CD4-positive, alpha-beta memory T cell (primary cell): ENCODE measurements at regions of chr2 and their contacts with region 1.

Region 1: DNA sequence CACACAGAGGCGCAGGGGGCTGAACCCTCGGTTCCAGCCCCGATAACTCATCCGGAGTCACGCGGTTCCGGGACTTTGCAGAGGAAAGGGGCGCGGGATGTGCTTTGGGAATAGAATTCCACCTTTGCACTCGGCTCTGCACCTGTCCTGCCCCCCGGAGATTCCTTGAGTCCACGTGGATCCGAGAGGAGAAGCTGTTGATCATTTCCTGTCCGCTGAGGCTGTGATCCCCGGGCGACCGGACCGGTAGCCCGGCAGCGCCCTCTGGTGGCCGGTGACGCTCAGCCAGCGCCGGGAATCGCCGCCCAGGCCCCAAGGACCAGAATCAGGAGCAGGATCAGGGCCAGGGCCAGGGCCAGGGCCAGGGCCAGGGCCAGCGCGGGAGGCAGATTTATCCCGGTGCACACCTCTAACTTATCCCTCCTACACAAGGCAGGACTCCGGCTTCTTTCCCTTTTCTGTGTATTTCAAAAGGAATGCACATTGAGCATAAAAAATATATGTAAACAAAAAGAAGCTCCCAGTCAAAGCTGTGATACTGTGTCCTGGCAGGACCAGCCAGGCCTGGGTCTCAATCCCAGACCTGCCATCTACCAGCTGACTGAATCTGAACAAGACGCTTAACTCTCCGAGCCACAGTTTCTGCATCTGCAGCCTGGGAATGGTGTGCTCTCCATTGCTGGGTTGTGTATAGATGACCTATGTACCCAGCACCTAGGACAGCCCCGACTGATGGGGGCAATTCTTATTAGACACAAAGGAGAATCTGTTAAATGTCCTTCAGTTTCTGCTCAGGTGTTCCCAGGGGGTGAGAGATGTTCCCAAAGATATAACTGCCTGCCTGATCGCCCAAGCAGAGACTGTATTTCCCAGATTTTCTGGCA is 8.5 kb upstream of the SPATA3 start:
- DNase-seq: peak; percentile 60 to 74 (median 69)
- H3K4me3 ChIP-seq: peak overlapping the region in 1 of 2 donors; percentile 63
- H3K4me3 Mint-ChIP-seq: peak overlapping the region; percentile 52 to 73 (median 63)
- H3K27ac ChIP-seq: no peak overlapping the region
- H3K27ac Mint-ChIP-seq: peak overlapping the region in 2 of 7 donors; percentile 41 to 74
- H3K4me1 ChIP-seq: peaks cover 17% of the 10 kb centered on the region
- H3K4me1 Mint-ChIP-seq: peaks cover 4 to 21% (median 14%) of the 10 kb centered on the region in 4 donors
- H3K27me3 ChIP-seq: no peaks in the 10 kb centered on the region
- H3K27me3 Mint-ChIP-seq: peaks cover 5 to 11% of the 10 kb centered on the region in 2 donors

Region 2: DNA sequence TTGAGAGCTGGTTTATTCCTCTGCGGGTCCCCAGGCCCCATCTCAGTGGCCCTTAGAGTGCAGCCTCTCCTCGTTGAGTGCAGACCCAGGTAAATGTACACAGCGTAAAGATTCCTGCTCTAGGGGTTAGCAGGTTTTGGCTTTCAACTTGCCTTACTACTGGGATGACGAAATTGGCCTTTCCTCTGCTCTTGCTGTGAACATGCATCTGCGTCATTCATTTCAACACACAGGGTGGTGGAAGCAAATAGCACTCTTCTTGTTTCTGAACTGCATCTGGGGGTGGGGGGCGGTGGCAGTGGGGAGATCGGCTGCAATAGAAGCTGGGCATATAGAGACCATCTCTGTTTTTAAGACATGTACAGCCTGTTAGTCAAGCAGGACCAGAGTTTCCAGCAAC is 902.2 kb before region 1 on chr2:
- CTCF ChIA-PET with region 1: no interaction called
- POLR2A ChIA-PET with region 1: no interaction called
- intact Hi-C with region 1: no loop called
- DNase-seq: no peak
- H3K4me3 ChIP-seq: no peak overlapping the region
- H3K4me3 Mint-ChIP-seq: no peak overlapping the region
- H3K27ac ChIP-seq: no peak overlapping the region
- H3K27ac Mint-ChIP-seq: no peak overlapping the region
- H3K4me1 ChIP-seq: no peaks in the 10 kb centered on the region
- H3K4me1 Mint-ChIP-seq: no peaks in the 10 kb centered on the region
- H3K27me3 ChIP-seq: no peaks in the 10 kb centered on the region
- H3K27me3 Mint-ChIP-seq: peaks cover 3 to 8% of the 10 kb centered on the region in 2 donors

Region 3: DNA sequence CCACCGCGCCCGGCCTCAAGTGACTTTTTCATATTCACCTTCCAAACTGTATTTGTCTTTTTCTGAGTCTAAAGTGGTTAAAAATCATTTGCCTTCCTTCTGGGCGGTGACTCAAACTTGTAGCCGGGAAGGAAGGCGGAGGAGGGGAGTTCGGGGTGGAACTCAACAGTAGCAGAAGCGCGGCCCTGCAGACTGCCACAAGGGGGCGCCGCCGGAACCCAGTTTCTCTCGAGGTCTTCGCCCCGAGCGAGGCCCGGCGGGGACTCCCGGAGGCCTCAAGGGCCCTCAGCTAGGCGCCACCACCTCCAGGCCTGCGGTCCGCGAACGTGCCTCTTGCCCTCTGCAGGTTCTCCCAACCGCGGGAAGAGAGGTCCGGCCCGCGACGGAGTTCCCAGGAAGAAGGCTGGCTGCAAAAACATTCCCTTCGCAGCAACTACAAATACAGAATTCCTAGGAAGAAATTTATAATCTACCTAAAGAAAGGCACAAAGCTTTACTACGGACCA is 139.4 kb before region 1 on chr2:
- CTCF ChIA-PET with region 1: interaction called, 30 read pairs
- POLR2A ChIA-PET with region 1: interaction called, 4 read pairs
- intact Hi-C with region 1: loop called (anchors 1 kb)
- DNase-seq: peak; percentile 74 to 82 (median 76)
- H3K4me3 ChIP-seq: no peak overlapping the region
- H3K4me3 Mint-ChIP-seq: peak overlapping the region in 6 of 8 donors; percentile 36 to 79 (median 50)
- H3K27ac ChIP-seq: no peak overlapping the region
- H3K27ac Mint-ChIP-seq: peak overlapping the region in 2 of 7 donors; percentile 27
- H3K4me1 ChIP-seq: peaks cover 8% of the 10 kb centered on the region
- H3K4me1 Mint-ChIP-seq: peaks cover 5 to 10% (median 7%) of the 10 kb centered on the region in 4 donors
- H3K27me3 ChIP-seq: no peaks in the 10 kb centered on the region
- H3K27me3 Mint-ChIP-seq: peaks cover 19 to 20% of the 10 kb centered on the region in 2 donors

Region 4: GRCh38 chr2:230902180-230902899 is 85.0 kb before region 1 on chr2:
- CTCF ChIA-PET with region 1: interaction called, 256 read pairs
- POLR2A ChIA-PET with region 1: interaction called, 12 read pairs
- intact Hi-C with region 1: loop called (anchors 1 kb)
- DNase-seq: peak in 4 of 5 donors; percentile 33 to 54 (median 38)
- H3K4me3 ChIP-seq: no peak overlapping the region
- H3K4me3 Mint-ChIP-seq: no peak overlapping the region
- H3K27ac ChIP-seq: no peak overlapping the region
- H3K27ac Mint-ChIP-seq: no peak overlapping the region
- H3K4me1 ChIP-seq: peaks cover 17% of the 10 kb centered on the region
- H3K4me1 Mint-ChIP-seq: peaks cover 7 to 23% (median 18%) of the 10 kb centered on the region in 4 donors
- H3K27me3 ChIP-seq: no peaks in the 10 kb centered on the region
- H3K27me3 Mint-ChIP-seq: peaks cover 5 to 7% of the 10 kb centered on the region in 2 donors

Region 5: GRCh38 chr2:230924470-230925341 is 62.7 kb before region 1 on chr2 and contains the start of gene GPR55:
- CTCF ChIA-PET with region 1: interaction called, 67 read pairs
- POLR2A ChIA-PET with region 1: interaction called, 14 read pairs
- intact Hi-C with region 1: loop called (anchors 1 kb)
- DNase-seq: peak; percentile 39 to 56 (median 53)
- H3K4me3 ChIP-seq: peak within 1 kb of the TSS; percentile 52 to 66
- H3K4me3 Mint-ChIP-seq: peak within 1 kb of the TSS; percentile 86 to 96 (median 92)
- H3K27ac ChIP-seq: peak within 1 kb of the TSS; percentile 40
- H3K27ac Mint-ChIP-seq: peak within 1 kb of the TSS; percentile 77 to 91 (median 84)
- H3K4me1 ChIP-seq: peaks cover 24% of the 10 kb centered on the region
- H3K4me1 Mint-ChIP-seq: peaks cover 24 to 53% (median 30%) of the 10 kb centered on the region in 4 donors
- H3K27me3 ChIP-seq: no peaks in the 10 kb centered on the region
- H3K27me3 Mint-ChIP-seq: peaks cover 2% of the 10 kb centered on the region in 2 donors
- total RNA-seq, gene GPR55: 8.1 to 8.3 TPM

Region 6: DNA sequence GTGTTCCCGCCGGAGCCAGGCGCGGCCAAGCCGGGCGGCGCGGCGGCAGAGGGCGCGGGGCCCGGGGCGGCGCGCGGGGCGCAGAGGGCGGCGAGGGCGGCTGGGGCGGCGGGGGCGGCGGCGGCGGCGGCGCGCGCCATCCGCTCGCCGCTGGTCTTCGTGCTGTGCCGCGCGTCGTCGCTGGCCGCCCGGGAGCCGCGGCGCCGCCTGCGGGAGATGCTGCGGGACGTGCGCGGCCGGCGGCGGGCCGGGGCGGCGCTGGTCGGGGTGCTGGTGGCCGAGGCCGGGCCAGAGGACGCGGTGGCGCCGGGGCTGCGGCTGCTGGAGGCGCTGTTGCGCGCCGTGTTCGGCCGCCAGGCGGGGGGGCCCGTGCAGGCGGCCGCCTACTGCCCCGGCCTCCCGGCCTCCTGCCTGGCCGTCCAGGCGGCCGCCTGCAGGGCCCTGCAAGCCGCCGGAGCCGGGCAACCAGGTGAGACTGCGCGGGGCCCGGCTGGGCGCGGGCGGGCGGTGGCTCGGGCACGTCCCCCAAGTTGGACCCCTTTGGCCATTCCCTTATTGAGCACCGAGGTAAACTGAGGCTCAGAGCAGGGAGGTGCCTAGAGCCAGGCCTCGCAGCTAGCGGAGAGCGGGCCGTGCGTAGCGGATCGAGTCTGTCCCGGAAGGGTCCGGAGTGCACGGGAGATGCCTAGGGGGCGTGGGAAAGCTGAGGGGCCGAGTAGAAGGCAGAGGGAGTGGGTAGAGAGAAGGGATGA is 50.5 kb after region 1 on chr2:
- CTCF ChIA-PET with region 1: no interaction called
- POLR2A ChIA-PET with region 1: no interaction called
- intact Hi-C with region 1: no loop called
- DNase-seq: no peak
- H3K4me3 ChIP-seq: no peak overlapping the region
- H3K4me3 Mint-ChIP-seq: peak overlapping the region in 7 of 8 donors; percentile 13 to 77 (median 68)
- H3K27ac ChIP-seq: no peak overlapping the region
- H3K27ac Mint-ChIP-seq: no peak overlapping the region
- H3K4me1 ChIP-seq: no peaks in the 10 kb centered on the region
- H3K4me1 Mint-ChIP-seq: peaks cover 0 to 9% (median 2%) of the 10 kb centered on the region in 4 donors
- H3K27me3 ChIP-seq: peaks cover 22% of the 10 kb centered on the region
- H3K27me3 Mint-ChIP-seq: peaks cover 38 to 54% of the 10 kb centered on the region in 2 donors